ENCODE measurements at regions of chr15 and their contacts with region 1.

Region 1: GRCh38 chr15:28994831-28995596 is 109.2 kb downstream of the APBA2 start:
- DNase-seq: no peak
- ATAC-seq: no peak
- H3K4me3 ChIP-seq: no peak overlapping the region
- H3K4me3 Mint-ChIP-seq: peak overlapping the region; percentile 73
- H3K27ac ChIP-seq: peak overlapping the region; percentile 85
- H3K27ac Mint-ChIP-seq: peak overlapping the region; percentile 90 to 93
- H3K4me1 ChIP-seq: peaks cover 53% of the 10 kb centered on the region
- H3K4me1 Mint-ChIP-seq: peaks cover 60 to 77% of the 10 kb centered on the region in 2 donors
- H3K27me3 ChIP-seq: no peaks in the 10 kb centered on the region
- H3K27me3 Mint-ChIP-seq: no peaks in the 10 kb centered on the region
- CTCF ChIP-seq: no peak

Region 2: DNA sequence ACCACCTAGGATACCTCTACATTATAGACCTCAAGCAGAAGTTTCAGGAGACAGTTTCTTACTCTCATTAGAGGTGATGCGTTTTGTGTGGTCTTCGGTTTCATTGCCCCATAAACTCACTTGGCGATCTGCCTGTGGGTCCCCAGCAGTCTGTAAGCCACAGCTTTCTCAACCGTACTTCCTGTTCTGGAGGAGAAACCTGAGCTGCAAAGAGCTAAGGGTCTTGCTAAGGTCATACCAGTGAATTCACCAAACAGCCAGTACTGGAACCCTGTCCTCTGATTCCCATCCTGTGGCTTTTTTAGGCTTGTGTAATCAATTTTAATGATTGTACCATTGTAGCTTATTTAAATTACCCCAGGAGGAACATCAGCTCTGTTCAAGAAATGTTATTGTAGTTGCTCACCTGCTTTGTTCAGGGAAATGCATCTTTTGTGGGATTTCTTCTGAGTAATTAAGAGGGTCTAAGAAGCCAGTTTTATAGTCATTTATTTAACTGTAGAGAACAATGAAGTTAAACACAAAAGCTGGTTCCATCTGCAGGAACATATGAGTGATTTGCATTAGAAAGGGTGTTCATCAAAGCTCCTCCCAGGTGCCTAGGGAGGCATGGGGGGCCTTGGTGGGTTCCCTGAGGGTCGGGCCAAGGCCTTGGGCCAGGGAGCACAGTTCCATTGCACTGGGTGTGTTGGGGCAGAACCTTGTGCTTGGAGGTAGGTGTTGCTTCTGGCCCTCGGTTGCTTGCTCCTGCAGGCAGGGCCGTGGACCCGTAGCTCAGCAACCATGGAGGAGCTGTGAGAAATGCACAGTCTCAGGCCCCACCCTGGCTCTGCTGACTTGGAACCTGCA is 39.6 kb before region 1 on chr15:
- intact Hi-C with region 1: loop called (anchors 5 kb)
- DNase-seq: peak in 1 of 2 donors; percentile 60
- ATAC-seq: peak; percentile 58 to 81 (median 62)
- H3K4me3 ChIP-seq: no peak overlapping the region
- H3K4me3 Mint-ChIP-seq: peak overlapping the region; percentile 87
- H3K27ac ChIP-seq: peak overlapping the region; percentile 71
- H3K27ac Mint-ChIP-seq: peak overlapping the region; percentile 94 to 95
- H3K4me1 ChIP-seq: peaks cover 58% of the 10 kb centered on the region
- H3K4me1 Mint-ChIP-seq: peaks cover 67 to 68% of the 10 kb centered on the region in 2 donors
- H3K27me3 ChIP-seq: no peaks in the 10 kb centered on the region
- H3K27me3 Mint-ChIP-seq: no peaks in the 10 kb centered on the region
- CTCF ChIP-seq: no peak

Region 3: GRCh38 chr15:29031502-29032228 is 36.7 kb after region 1 on chr15:
- intact Hi-C with region 1: loop called (anchors 5 kb)
- DNase-seq: peak; percentile 35 to 45
- ATAC-seq: peak; percentile 83 to 87 (median 83)
- H3K4me3 ChIP-seq: no peak overlapping the region
- H3K4me3 Mint-ChIP-seq: peak overlapping the region; percentile 60
- H3K27ac ChIP-seq: peak overlapping the region; percentile 75
- H3K27ac Mint-ChIP-seq: peak overlapping the region; percentile 87 to 90
- H3K4me1 ChIP-seq: peaks cover 64% of the 10 kb centered on the region
- H3K4me1 Mint-ChIP-seq: peaks cover 72 to 79% of the 10 kb centered on the region in 2 donors
- H3K27me3 ChIP-seq: no peaks in the 10 kb centered on the region
- H3K27me3 Mint-ChIP-seq: no peaks in the 10 kb centered on the region
- CTCF ChIP-seq: no peak

Region 4: GRCh38 chr15:29050870-29051269 is 55.9 kb after region 1 on chr15:
- intact Hi-C with region 1: loop called (anchors 2 kb)
- DNase-seq: peak; percentile 28 to 57
- ATAC-seq: peak; percentile 88 to 96 (median 90)
- H3K4me3 ChIP-seq: no peak overlapping the region
- H3K4me3 Mint-ChIP-seq: peak overlapping the region; percentile 63
- H3K27ac ChIP-seq: peak overlapping the region; percentile 54
- H3K27ac Mint-ChIP-seq: peak overlapping the region; percentile 83 to 87
- H3K4me1 ChIP-seq: peaks cover 26% of the 10 kb centered on the region
- H3K4me1 Mint-ChIP-seq: peaks cover 56 to 60% of the 10 kb centered on the region in 2 donors
- H3K27me3 ChIP-seq: no peaks in the 10 kb centered on the region
- H3K27me3 Mint-ChIP-seq: no peaks in the 10 kb centered on the region
- CTCF ChIP-seq: no peak

Region 5: GRCh38 chr15:29062179-29062591 is 67.2 kb after region 1 on chr15:
- intact Hi-C with region 1: no loop called
- DNase-seq: no peak
- ATAC-seq: no peak
- H3K4me3 ChIP-seq: no peak overlapping the region
- H3K4me3 Mint-ChIP-seq: no peak overlapping the region
- H3K27ac ChIP-seq: no peak overlapping the region
- H3K27ac Mint-ChIP-seq: peak overlapping the region in 1 of 2 donors; percentile 64
- H3K4me1 ChIP-seq: peaks cover 36% of the 10 kb centered on the region
- H3K4me1 Mint-ChIP-seq: peaks cover 72 to 83% of the 10 kb centered on the region in 2 donors
- H3K27me3 ChIP-seq: no peaks in the 10 kb centered on the region
- H3K27me3 Mint-ChIP-seq: no peaks in the 10 kb centered on the region
- CTCF ChIP-seq: no peak

Measured in natural killer cell (primary cell).